Heart right ventricle (tissue), 16 donors: ENCODE measurements at regions of chr16 and their contacts with region 1.

Region 1: DNA sequence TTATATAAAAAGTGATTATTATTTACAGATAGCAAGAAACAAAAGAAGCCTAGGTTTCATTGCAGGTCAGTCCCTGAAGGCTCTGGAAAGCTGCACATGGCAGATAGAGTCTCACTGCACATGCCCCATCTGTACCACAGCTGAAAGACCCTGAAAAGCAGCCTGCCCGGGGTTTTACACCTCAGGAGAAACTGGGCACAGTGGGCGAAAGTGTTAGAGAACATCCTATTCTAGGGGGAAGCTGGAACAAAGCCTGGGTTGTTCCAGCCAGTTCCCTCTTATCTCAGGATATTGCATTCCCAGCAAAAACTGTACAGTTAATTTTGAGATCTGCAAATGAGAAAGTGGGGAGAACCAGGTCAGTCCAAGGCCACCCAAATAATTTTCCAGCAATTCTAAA is 419.7 kb downstream of the CNTNAP4 start:
- DNase-seq: no peak
- ATAC-seq: no peak
- H3K4me3 ChIP-seq: no peak overlapping the region
- H3K27ac ChIP-seq: no peak overlapping the region
- H3K4me1 ChIP-seq: no peaks in the 10 kb centered on the region
- H3K27me3 ChIP-seq: no peaks in the 10 kb centered on the region
- CTCF ChIP-seq: no peak

Region 2: GRCh38 chr16:76614269-76614668 is 82.6 kb before region 1 on chr16:
- intact Hi-C with region 1: no loop called
- DNase-seq: no peak
- ATAC-seq: no peak
- H3K4me3 ChIP-seq: no peak overlapping the region
- H3K27ac ChIP-seq: no peak overlapping the region
- H3K4me1 ChIP-seq: peaks cover 0 to 6% (median 0%) of the 10 kb centered on the region in 9 donors
- H3K27me3 ChIP-seq: no peaks in the 10 kb centered on the region
- CTCF ChIP-seq: no peak

Region 3: GRCh38 chr16:77705351-77705750 is 1008.5 kb after region 1 on chr16:
- intact Hi-C with region 1: loop called in 1 of 10 experiments (anchors 5 kb)
- DNase-seq: no peak
- ATAC-seq: no peak
- H3K4me3 ChIP-seq: no peak overlapping the region
- H3K27ac ChIP-seq: no peak overlapping the region
- H3K4me1 ChIP-seq: no peaks in the 10 kb centered on the region
- H3K27me3 ChIP-seq: peaks cover 0 to 13% (median 0%) of the 10 kb centered on the region in 7 donors
- CTCF ChIP-seq: no peak